ENCODE measurements at regions of chr16 and their contacts with region 1.

Region 1: DNA sequence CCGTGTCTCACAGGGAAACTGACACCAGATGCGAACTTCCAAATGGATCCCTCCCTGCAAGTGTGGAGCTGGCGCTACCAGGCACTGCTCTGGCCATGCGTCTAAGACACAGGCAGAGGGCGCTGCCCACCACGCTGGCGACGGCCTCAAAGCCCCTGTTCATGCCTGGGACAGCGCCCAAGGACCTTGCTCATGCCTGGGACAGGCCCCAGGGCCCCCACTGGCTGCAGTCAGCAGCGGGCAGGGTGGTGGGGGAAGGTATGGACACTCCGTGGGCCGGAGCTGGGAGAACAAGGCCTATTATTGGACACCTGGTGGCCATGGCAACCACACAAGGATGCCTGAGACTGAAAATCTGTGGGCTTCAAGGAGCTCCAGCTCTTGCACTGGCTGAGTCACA is 8.8 kb downstream of the ZG16B start:
- DNase-seq: peak; percentile 89
- ATAC-seq: peak; percentile 90
- H3K4me3 ChIP-seq: no peak overlapping the region
- H3K27ac ChIP-seq: no peak overlapping the region
- H3K4me1 ChIP-seq: peaks cover 10% of the 10 kb centered on the region
- H3K27me3 ChIP-seq: no peaks in the 10 kb centered on the region
- CTCF ChIP-seq: peak; percentile 97
- POLR2A ChIP-seq: peak; percentile 40; the same call in 1 of the 2 replicates
- RAD21 ChIP-seq: peak; percentile 98

Region 2: DNA sequence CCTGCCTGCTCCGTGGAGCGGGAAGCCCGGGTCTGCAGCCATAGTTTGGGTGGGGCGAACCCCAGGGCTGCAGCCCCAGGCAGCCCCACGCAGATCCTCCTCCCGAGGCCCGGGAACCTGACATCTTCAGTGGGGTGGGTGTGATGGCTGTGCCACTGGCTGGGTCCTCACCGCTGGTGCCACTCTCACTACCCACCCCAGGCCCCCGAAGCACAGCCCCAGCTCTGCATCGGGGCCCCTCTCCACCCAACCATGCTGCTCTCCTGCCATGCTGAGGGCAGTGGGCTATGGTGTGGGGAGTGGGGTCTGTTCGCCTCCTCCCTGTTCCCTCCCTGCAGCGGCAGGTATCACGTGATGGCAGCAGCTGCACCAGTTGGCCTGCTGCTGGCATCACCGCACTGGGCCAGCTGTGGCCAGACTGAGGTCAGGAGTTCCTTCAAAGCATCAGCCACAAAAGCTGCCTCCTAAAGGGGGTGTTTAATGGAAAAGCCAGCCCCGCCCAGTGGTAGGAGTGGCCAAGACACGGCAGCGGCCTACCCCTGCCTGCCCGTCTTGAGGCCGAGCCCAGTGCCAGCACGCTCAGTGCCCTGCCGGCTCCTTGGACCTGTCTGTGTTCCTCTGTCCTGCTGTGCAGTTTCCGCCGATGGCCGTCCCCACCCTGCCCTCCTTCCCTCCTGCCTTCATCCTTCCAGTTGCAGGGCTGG is 145.8 kb before region 1 on chr16:
- CTCF ChIA-PET with region 1: no interaction called
- POLR2A ChIA-PET with region 1: no interaction called
- dilution Hi-C with region 1: no loop called
- in situ Hi-C with region 1: no loop called
- intact Hi-C with region 1: no loop called
- DNase-seq: peak; percentile 52
- ATAC-seq: peak; percentile 73
- H3K4me3 ChIP-seq: no peak overlapping the region
- H3K27ac ChIP-seq: no peak overlapping the region
- H3K4me1 ChIP-seq: peaks cover 6% of the 10 kb centered on the region; the same call in 1 of the 2 replicates
- H3K27me3 ChIP-seq: no peaks in the 10 kb centered on the region
- CTCF ChIP-seq: no peak
- POLR2A ChIP-seq: no peak
- RAD21 ChIP-seq: no peak

Region 3: DNA sequence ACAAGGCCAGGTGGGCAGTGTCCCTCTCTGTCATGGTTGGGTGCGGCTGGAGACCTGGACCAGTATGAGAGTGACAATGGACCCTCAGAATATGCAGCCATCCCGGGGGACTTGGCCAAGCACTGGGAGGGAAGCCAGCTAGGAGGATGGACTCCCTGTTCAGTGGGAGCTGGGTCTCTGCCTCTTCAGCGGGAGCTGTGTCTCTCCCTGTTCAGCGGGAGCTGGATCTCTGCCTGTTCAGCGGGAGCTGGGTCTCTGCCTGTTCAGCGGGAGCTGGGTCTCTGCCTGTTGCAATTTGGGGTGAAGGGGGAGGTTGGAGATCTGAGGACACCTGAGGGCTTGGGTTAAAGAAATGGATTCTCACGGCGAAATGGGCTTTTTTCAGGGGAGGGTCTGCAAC is 47.8 kb before region 1 on chr16:
- CTCF ChIA-PET with region 1: no interaction called
- POLR2A ChIA-PET with region 1: no interaction called
- dilution Hi-C with region 1: no loop called
- in situ Hi-C with region 1: no loop called
- intact Hi-C with region 1: loop called (anchors 5 kb)
- DNase-seq: no peak
- ATAC-seq: no peak
- H3K4me3 ChIP-seq: no peak overlapping the region
- H3K27ac ChIP-seq: no peak overlapping the region
- H3K4me1 ChIP-seq: no peaks in the 10 kb centered on the region
- H3K27me3 ChIP-seq: peaks cover 48% of the 10 kb centered on the region
- CTCF ChIP-seq: no peak
- POLR2A ChIP-seq: no peak
- RAD21 ChIP-seq: no peak

Region 4: GRCh38 chr16:2867987-2868789 is 29.3 kb after region 1 on chr16:
- CTCF ChIA-PET with region 1: interaction called, 54 read pairs
- POLR2A ChIA-PET with region 1: interaction called, 6 read pairs
- dilution Hi-C with region 1: no loop called
- in situ Hi-C with region 1: no loop called
- intact Hi-C with region 1: loop called (anchors 1 kb)
- DNase-seq: peak; percentile 93
- ATAC-seq: peak; percentile 99
- H3K4me3 ChIP-seq: peak overlapping the region; percentile 67
- H3K27ac ChIP-seq: peak overlapping the region; percentile 94
- H3K4me1 ChIP-seq: peaks cover 3% of the 10 kb centered on the region
- H3K27me3 ChIP-seq: no peaks in the 10 kb centered on the region
- CTCF ChIP-seq: peak; percentile 99
- POLR2A ChIP-seq: peak; percentile 67
- RAD21 ChIP-seq: peak; percentile 97

Region 5: DNA sequence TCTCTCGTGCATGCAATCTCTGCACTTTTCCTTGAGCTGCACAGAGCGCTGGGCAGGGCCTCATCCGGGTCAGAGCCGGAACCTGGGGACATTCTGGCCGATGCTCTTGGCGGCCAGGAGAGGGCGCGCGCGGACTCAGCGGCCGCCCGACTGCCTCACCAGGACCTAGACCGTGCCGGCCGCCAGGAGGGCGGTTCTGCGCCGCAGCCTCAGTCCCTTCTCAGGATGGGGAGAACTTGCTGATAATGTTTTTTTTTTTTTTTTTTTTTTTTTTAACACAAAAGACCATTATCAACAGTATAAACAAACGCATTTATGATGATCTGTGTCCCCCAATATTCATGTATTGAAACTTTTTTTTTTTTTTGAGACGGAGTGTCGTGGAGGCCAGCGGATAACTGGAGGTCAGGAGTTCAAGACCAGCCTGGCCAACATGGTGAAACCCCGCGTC is 36.0 kb after region 1 on chr16:
- CTCF ChIA-PET with region 1: interaction called, 23 read pairs
- POLR2A ChIA-PET with region 1: no interaction called
- dilution Hi-C with region 1: no loop called
- in situ Hi-C with region 1: no loop called
- intact Hi-C with region 1: no loop called
- DNase-seq: peak; percentile 61
- ATAC-seq: peak; percentile 100
- H3K4me3 ChIP-seq: no peak overlapping the region
- H3K27ac ChIP-seq: no peak overlapping the region
- H3K4me1 ChIP-seq: no peaks in the 10 kb centered on the region
- H3K27me3 ChIP-seq: no peaks in the 10 kb centered on the region
- CTCF ChIP-seq: peak; percentile 97
- POLR2A ChIP-seq: no peak
- RAD21 ChIP-seq: peak; percentile 74

Region 6: DNA sequence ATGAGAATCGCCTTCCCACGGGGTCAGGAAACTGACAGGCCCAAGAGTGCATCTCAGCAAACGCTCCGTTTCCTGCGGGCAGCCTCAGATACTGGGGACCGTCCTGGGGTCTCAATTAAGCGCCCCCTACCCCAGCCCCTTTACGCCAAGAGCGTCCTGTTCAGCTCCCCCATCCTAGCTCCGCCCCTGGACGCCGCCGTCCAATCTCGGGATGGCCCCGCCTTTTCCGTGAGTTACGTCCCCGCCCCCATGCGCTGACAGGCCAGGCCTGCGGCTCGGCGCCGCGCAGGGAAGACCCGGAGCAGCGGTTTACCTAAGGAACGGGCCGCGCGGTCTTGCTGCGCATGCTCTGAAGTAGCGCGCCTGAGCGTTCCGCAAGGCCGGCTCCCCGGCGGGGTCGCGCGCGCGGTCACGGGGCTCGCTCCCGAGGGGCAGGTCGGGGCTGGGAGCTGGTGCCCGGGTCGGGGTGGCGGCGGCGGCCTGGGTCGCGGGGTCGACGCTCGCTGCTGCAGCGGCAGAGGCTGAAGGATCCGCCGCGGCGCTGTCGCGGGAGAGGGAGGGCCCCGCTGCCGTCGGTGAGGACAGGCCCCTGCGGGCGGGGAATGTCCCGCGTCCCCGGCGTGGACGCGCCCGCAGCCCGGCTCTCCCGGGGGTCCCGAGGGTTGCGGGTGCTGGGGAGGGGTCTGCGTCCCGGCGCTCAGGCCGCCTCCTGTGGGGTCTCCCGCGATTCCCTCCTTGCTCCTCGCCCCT is 72.8 kb after region 1 on chr16 and contains the start of gene FLYWCH1:
- CTCF ChIA-PET with region 1: interaction called, 4 read pairs
- POLR2A ChIA-PET with region 1: no interaction called
- dilution Hi-C with region 1: no loop called
- in situ Hi-C with region 1: loop called (anchors 10 kb)
- intact Hi-C with region 1: no loop called
- DNase-seq: peak; percentile 98
- ATAC-seq: peak; percentile 96
- H3K4me3 ChIP-seq: peak within 1 kb of the TSS; percentile 67
- H3K27ac ChIP-seq: peak within 1 kb of the TSS; percentile 62
- H3K4me1 ChIP-seq: peaks cover 6% of the 10 kb centered on the region
- H3K27me3 ChIP-seq: no peaks in the 10 kb centered on the region
- CTCF ChIP-seq: no peak
- POLR2A ChIP-seq: no peak
- RAD21 ChIP-seq: no peak
- total RNA-seq, gene FLYWCH1: 14.3 and 16.1 TPM in 2 replicates

Region 7: DNA sequence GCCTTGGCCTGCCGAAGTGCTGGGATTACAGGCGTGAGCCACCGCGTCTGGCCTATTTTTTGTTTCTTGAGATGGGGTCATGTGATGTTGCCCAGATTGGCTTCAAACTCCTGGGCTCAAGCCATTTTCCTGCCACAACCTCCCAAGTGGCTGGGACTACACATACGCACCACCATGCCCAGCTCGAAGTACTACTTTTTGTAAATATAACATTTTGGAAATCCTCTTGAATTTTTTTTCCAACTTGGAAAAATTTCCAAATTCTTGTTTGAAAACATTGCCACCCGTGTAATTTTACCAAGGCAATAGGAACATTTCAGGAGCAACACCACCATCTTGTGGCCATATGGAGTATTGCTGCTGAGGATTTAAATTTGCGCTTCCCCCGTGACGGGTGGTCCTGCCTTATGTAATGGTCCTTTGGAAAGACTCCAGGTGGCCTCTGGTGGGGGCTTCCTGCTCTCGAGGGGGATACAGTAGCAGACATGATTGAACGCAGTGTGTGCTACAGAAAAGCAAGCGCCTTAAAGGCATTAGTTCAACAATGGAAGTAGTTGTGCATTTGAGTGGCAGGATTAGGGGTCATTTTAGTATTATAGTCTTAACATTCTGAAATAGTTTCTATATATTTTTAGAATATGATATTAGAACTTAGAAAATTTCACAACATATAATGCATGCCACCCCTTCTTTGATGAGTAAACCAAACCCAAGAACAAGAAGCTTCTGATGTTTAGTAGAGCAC is 80.8 kb after region 1 on chr16:
- CTCF ChIA-PET with region 1: interaction called, 3 read pairs
- POLR2A ChIA-PET with region 1: no interaction called
- dilution Hi-C with region 1: no loop called
- in situ Hi-C with region 1: loop called (anchors 10 kb)
- intact Hi-C with region 1: loop called (anchors 2 kb)
- DNase-seq: peak; percentile 74
- ATAC-seq: peak; percentile 86
- H3K4me3 ChIP-seq: no peak overlapping the region
- H3K27ac ChIP-seq: no peak overlapping the region
- H3K4me1 ChIP-seq: peaks cover 5% of the 10 kb centered on the region
- H3K27me3 ChIP-seq: no peaks in the 10 kb centered on the region
- CTCF ChIP-seq: peak; percentile 91
- POLR2A ChIP-seq: no peak
- RAD21 ChIP-seq: peak; percentile 86